SK-N-SH (cell line): ENCODE measurements at regions of chr7 and their contacts with region 1.

Region 1: DNA sequence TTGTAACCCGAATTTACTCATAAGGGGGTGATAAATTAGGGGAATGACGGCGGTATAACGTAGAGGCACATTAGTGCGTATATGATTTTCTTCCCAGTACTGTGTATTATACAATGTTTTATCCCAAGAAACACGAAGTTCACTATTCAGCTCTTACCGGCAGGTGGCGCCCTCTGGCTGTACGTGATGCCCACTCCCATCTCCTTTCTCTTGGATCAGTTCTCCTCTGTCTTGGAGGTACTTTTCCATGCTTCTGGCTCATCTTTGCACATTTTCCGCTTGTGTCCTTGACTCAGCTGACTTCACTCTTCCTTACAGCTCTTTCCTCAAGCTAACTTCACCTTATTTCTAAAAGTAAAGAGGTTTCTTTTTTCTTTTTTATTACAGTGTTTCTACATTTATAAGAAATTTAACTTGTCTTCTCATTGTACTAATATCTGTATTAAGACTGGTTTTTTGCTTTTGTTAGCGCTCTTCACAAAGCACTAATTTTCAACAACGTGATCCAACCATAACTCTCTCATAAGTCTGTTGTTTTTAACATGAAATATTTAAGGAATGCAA is 21.3 kb downstream of the TMEM176B start:
- DNase-seq: peak; percentile 78
- H3K4me3 ChIP-seq: no peak overlapping the region; a peak in 1 of 4 replicates
- H3K27ac ChIP-seq: 0 out of 4 replicates have a peak overlapping the region, but pooled peaks of 1 of the 2 experiments have one; percentile 7
- H3K4me1 ChIP-seq: peaks cover 0 to 6% of the 10 kb centered on the region in 2 experiments; a peak in 2 of 4 replicates
- H3K27me3 ChIP-seq: no peaks in the 10 kb centered on the region; the same call in 1 of the 2 replicates
- CTCF ChIP-seq: peak; percentile 99
- EP300 ChIP-seq: no peak
- RAD21 ChIP-seq: peak; percentile 100

Region 2: DNA sequence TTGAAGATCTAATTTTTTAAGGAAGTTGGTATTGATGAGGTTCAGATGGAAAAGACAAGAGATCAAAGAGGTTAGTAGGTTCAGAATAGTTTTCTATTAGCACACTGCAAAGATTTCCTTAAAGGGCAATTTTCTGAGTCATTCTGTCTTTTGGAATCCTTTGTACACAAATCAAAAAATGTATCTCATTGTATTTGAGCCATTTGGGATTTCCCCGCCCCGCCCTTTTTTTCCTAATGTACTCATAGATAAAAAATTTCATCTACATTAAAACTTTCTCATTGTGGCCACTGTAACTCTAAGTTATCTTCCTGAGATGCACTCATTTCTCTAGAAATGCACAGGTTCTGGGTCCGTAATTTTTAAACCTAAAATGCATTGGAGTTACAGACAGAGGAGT is 158.8 kb before region 1 on chr7:
- CTCF ChIA-PET with region 1: no interaction called
- POLR2A ChIA-PET with region 1: no interaction called
- DNase-seq: no peak
- H3K4me3 ChIP-seq: no peak overlapping the region
- H3K27ac ChIP-seq: no peak overlapping the region
- H3K4me1 ChIP-seq: no peaks in the 10 kb centered on the region
- H3K27me3 ChIP-seq: 0 out of 2 replicates have a peak, but pooled peaks cover 11% of the 10 kb centered on the region
- CTCF ChIP-seq: no peak
- EP300 ChIP-seq: no peak
- RAD21 ChIP-seq: no peak

Region 3: GRCh38 chr7:150854066-150855000 is 75.5 kb after region 1 on chr7:
- CTCF ChIA-PET with region 1: interaction called, 18 read pairs
- POLR2A ChIA-PET with region 1: no interaction called
- DNase-seq: no peak
- H3K4me3 ChIP-seq: no peak overlapping the region
- H3K27ac ChIP-seq: no peak overlapping the region
- H3K4me1 ChIP-seq: no peaks in the 10 kb centered on the region; a peak in 1 of 4 replicates
- H3K27me3 ChIP-seq: peaks cover 12% of the 10 kb centered on the region; the same call in 1 of the 2 replicates
- CTCF ChIP-seq: no peak
- EP300 ChIP-seq: no peak
- RAD21 ChIP-seq: no peak

Region 4: DNA sequence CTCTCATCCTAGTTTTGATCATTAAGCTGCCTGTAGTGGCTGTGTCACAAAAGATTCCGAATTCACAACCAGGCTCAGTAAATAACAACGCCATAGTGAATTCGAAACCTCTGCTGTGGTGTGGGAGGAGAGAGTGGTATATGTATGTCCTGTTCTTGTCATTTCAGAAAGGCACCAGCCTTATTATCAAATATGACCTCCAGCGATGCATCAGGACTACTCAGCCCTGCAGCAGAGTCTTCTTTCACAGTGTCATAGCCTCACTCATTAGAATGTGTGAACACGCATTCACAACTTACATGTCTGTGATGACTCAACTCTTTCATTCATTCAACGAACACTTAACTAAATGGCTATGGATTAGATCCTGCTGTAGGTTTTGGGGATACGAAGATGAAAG is 88.8 kb after region 1 on chr7:
- CTCF ChIA-PET with region 1: interaction called, 11 read pairs
- POLR2A ChIA-PET with region 1: no interaction called
- DNase-seq: no peak
- H3K4me3 ChIP-seq: no peak overlapping the region
- H3K27ac ChIP-seq: no peak overlapping the region
- H3K4me1 ChIP-seq: peaks cover 0 to 4% of the 10 kb centered on the region in 2 experiments; a peak in 1 of 4 replicates
- H3K27me3 ChIP-seq: no peaks in the 10 kb centered on the region
- CTCF ChIP-seq: no peak
- EP300 ChIP-seq: no peak
- RAD21 ChIP-seq: no peak

Region 5: GRCh38 chr7:150903606-150904005 is 124.8 kb after region 1 on chr7:
- CTCF ChIA-PET with region 1: interaction called, 33 read pairs
- POLR2A ChIA-PET with region 1: no interaction called
- DNase-seq: peak; percentile 40
- H3K4me3 ChIP-seq: no peak overlapping the region
- H3K27ac ChIP-seq: peak overlapping the region in 1 of 2 experiments; percentile 12; a peak in 1 of 4 replicates
- H3K4me1 ChIP-seq: peaks cover 11 to 35% of the 10 kb centered on the region in 2 experiments; a peak in 3 of 4 replicates
- H3K27me3 ChIP-seq: no peaks in the 10 kb centered on the region
- CTCF ChIP-seq: no peak
- EP300 ChIP-seq: peak in 1 of 2 experiments; percentile 81; a peak in 2 of 4 replicates
- RAD21 ChIP-seq: no peak

Region 6: DNA sequence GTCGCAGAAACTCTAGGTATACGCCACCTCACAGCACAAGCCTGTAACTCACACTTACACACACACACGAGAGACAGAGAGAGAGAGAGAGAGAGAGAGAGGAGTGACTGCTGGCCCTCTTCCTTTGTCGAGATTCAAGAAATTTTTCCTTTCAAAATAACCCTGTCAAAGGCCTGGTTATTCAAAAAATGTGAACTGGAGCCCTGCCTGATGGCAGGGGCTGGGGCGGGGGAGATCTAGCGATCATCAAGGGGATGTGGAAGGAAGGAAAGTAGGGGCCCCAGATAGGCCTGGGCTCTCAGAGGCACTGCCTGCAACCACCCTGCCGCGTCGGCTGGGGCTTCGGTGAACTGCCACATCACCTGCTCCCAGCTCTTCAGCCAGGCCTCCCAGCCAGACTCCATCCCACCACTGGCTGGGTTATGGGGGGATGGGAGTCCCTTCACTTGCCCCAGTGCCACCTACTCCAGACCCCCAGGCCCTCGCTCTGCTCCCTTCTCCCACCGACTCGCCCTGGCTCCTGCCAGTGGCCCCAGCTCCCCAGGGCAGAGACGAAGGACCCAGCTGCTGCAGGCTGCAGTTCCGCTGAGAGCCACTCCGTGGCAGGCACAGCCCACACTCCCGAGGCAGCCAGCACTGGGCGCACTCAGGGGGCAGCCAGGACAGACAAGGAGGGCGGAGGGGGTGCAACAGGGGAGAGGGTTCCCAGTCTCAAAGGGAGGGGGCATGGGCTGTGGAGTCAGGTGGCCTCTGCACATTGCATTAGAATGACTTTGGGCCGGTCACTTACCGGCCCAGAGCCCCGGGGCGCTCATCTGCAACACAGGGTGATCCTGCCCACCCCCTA is 184.0 kb after region 1 on chr7:
- CTCF ChIA-PET with region 1: interaction called, 41 read pairs
- POLR2A ChIA-PET with region 1: no interaction called
- DNase-seq: peak; percentile 94
- H3K4me3 ChIP-seq: peak overlapping the region in 1 of 2 experiments; percentile 48; a peak in 1 of 4 replicates
- H3K27ac ChIP-seq: peak overlapping the region in 1 of 2 experiments; percentile 97; a peak in 2 of 4 replicates
- H3K4me1 ChIP-seq: peaks cover 0 to 89% of the 10 kb centered on the region in 2 experiments; a peak in 2 of 4 replicates
- H3K27me3 ChIP-seq: peaks cover 16% of the 10 kb centered on the region
- CTCF ChIP-seq: peak; percentile 95
- EP300 ChIP-seq: peak in 1 of 2 experiments; percentile 39; a peak in 1 of 4 replicates
- RAD21 ChIP-seq: peak; percentile 94

Region 7: GRCh38 chr7:150974468-150975391 is 195.9 kb after region 1 on chr7:
- CTCF ChIA-PET with region 1: interaction called, 21 read pairs
- POLR2A ChIA-PET with region 1: no interaction called
- DNase-seq: peak; percentile 82
- H3K4me3 ChIP-seq: peak overlapping the region in 1 of 2 experiments; percentile 37; a peak in 2 of 4 replicates
- H3K27ac ChIP-seq: peak overlapping the region in 1 of 2 experiments; percentile 100; a peak in 3 of 4 replicates
- H3K4me1 ChIP-seq: peaks cover 0 to 90% of the 10 kb centered on the region in 2 experiments; a peak in 2 of 4 replicates
- H3K27me3 ChIP-seq: peaks cover 71% of the 10 kb centered on the region
- CTCF ChIP-seq: peak; percentile 36
- EP300 ChIP-seq: no peak
- RAD21 ChIP-seq: peak; percentile 38; the same call in 1 of the 2 replicates